Right ventricle myocardium inferior (tissue), 1 donor: ENCODE measurements at regions of chr19 and their contacts with region 1.

Region 1: GRCh38 chr19:17859533-17860330 is at the start of gene RPL18A:
- DNase-seq: peak; percentile 99
- ATAC-seq: peak; percentile 98
- total RNA-seq, gene RPL18A: 860 TPM

Region 2: DNA sequence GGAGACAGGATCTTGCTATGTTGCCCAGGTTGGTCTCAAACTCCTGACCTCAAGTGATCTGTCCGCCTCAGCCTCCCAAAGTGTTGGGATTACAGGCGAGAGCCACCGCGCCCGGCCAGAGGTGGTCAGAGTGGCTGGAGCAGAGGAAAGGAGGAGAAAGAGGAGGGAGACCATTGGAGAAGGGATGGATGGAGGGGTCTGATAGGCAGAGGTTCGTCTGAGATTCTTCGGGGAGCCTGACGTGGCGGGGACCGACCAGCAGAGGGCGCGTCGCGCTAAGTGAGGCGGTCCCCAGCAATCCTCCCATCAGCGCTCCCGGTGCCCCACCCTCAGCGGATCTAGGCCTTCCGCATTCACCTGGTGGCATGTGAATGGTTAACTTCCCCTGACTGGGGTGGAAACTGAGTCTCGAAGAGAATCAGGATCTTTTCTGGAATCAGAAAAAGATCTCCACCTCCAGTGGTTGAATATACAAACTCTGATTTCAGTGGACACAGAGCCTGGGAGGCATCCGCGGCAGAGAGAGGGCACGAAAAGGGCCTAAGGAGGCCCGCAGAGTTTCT is 513.5 kb before region 1 on chr19:
- intact Hi-C with region 1: loop called (anchors 5 kb)
- DNase-seq: peak; percentile 89
- ATAC-seq: peak; percentile 72

Region 3: DNA sequence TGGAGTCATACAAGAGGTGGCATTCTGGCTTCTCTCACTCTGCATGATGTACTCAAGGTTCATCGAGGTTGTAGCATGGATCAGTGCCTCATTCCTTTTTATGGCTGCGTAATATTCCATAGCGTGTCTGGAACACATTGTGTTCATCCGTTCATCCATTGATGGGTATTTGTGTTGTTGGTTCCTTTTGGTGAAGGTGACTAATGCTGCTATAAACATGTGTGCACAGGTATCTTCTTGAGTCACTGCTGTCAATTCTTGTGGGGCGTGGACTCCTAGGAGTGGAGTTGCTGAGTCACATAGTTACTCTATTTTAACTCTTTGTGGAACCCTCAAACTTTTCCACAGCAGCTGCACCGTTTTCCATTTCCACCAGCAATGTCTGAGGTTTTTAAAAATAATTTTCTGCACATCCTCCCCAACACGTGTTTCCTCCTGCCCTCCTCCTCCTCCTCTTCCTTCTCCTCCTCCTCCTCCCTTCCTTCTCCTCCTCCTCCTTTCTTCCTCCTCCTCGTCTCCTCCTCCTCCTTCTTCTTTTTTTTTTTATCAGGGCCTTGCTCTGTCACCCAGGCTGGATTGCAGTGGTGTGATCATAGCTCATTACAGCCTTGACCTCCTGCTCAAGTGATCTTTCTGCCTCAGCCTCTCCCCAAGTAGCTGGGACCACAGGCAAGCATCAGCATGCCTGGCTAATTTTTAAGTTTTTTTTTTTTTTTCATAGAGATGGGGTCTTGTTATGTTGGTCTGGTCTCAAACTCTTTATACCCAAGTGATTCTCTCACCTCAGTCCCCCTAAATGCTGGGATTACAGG is 409.3 kb before region 1 on chr19:
- intact Hi-C with region 1: loop called (anchors 5 kb)
- DNase-seq: no peak
- ATAC-seq: no peak

Region 4: DNA sequence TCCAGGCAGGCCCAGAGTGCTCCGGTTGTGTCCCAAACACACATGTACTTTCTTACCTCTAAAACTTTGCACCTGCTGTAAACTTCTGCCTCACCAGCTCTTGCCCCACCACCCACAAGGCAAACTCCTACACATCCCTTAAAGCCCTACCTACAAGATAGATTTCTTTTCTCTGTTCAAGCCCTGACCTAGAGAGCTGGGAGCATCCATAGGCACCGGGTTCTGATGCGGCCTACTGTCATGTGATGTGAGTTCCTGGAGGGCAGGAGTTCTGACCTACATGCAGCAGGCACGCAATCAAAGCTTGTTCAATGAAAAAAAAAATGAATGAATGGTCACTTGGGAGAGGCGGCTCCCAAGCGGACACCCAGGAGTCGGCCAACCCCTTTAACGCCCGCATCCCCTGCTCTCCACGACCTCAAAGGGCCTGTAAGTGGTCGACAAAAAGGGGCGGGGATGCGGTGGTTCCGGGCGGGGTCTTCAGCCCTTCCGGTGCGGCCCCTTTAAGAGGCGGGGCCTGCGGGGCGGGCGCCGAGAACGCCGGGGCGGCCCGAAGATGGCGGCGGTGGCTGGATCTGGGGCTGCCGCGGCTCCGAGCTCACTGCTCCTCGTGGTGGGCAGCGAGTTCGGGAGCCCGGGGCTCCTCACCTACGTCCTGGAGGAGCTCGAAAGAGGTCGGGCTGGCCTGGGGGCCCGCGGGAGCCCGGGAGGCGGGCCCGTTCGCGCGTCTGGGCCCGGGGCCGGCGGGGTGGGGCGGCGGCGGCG is 140.6 kb before region 1 on chr19 and contains the start of gene MAP1S:
- intact Hi-C with region 1: loop called (anchors 10 kb)
- DNase-seq: peak; percentile 87
- ATAC-seq: peak; percentile 47
- total RNA-seq, gene MAP1S: 26.0 TPM

Region 5: GRCh38 chr19:17932485-17933338 is 73.0 kb after region 1 on chr19 and contains the start of gene CCDC124:
- intact Hi-C with region 1: loop called (anchors 1 kb)
- DNase-seq: peak; percentile 95
- ATAC-seq: peak; percentile 97
- total RNA-seq, gene CCDC124: 85.9 TPM

Region 6: DNA sequence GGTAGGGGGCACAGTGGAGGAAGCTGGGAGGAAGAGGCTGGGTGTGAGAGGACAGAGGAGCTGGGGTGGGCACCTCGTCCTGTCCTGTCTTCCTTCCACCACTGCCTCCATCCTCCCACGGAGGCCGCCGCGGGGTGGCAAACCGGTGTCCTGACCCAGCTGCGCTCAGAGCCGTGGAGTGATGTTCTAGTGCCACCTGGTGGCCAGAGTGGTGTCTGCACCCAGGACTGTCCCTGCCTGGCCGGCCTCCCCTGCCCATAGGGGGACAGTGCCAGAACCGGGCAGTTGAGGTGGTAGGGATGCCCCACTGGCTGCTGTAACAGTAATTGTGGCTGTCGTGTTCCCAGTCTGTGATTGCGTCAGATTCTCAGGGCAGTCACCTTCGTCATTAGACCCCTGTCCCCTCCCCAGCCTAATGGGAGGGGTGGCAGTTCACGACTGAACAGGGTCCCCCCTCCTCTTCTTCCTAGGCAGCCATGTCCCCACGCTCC is 137.1 kb after region 1 on chr19:
- intact Hi-C with region 1: loop called (anchors 2 kb)
- DNase-seq: peak; percentile 91
- ATAC-seq: peak; percentile 85